Panc1 (cell line): ENCODE measurements at regions of chr1 and their contacts with region 1.

Region 1: DNA sequence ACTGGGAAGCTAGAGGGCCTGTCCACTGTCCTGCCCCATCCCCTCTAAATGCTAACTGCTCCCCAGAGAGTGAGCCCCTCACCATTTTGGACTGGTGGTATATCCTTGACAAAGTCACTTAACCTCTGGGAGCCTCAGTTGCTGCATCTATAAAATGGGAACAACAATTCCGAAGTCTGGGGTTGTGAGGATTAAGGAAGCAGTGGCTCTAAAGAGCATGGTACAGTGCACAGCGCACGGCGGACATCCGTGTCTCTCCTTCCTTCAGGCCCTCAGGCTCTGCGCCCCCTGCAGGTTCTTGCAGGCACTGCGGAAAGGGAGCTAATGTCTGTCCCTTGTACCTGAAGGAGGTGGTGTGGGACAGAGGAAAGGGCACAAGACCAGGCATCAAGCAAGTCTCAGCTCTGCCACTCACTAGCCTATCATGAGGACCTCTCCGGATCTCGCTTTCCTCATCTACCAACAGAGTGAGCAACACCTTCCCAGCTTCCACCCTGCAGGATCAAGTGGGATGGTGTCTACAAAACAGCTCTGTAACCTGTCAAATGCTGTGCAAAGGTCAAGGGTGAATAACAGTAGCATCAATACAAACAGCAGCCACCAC is 20.1 kb downstream of the ECE1 start:
- DNase-seq: peak; percentile 67
- ATAC-seq: peak; percentile 83
- H3K4me3 ChIP-seq: no peak overlapping the region
- H3K27ac ChIP-seq: no peak overlapping the region
- H3K4me1 ChIP-seq: no peaks in the 10 kb centered on the region
- H3K27me3 ChIP-seq: no peaks in the 10 kb centered on the region
- CTCF ChIP-seq: peak; percentile 96

Region 2: DNA sequence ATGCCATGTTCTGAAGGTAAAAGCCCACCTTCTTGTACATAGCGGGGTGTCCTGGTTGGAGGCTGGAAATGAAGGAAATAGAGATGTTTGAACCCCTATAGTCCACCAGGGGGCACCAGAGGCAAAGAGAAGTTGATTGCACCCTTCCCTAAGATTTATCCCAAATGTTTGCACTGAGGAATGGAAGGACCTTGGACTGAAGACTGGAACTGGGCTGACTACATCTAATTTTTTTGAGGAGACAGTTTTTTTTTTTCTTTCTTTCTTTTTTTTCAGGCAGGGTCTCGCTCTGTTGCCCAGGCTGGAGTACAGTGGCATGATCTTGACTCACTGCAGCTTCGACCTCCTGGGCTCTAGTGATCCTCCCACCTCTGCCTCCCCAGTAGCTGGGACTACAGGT is 38.1 kb before region 1 on chr1:
- CTCF ChIA-PET with region 1: interaction called, 15 read pairs
- POLR2A ChIA-PET with region 1: no interaction called
- in situ Hi-C with region 1: no loop called
- intact Hi-C with region 1: no loop called
- DNase-seq: no peak
- ATAC-seq: peak; percentile 83
- H3K4me3 ChIP-seq: no peak overlapping the region
- H3K27ac ChIP-seq: no peak overlapping the region
- H3K4me1 ChIP-seq: no peaks in the 10 kb centered on the region
- H3K27me3 ChIP-seq: no peaks in the 10 kb centered on the region
- CTCF ChIP-seq: peak; percentile 90

Region 3: DNA sequence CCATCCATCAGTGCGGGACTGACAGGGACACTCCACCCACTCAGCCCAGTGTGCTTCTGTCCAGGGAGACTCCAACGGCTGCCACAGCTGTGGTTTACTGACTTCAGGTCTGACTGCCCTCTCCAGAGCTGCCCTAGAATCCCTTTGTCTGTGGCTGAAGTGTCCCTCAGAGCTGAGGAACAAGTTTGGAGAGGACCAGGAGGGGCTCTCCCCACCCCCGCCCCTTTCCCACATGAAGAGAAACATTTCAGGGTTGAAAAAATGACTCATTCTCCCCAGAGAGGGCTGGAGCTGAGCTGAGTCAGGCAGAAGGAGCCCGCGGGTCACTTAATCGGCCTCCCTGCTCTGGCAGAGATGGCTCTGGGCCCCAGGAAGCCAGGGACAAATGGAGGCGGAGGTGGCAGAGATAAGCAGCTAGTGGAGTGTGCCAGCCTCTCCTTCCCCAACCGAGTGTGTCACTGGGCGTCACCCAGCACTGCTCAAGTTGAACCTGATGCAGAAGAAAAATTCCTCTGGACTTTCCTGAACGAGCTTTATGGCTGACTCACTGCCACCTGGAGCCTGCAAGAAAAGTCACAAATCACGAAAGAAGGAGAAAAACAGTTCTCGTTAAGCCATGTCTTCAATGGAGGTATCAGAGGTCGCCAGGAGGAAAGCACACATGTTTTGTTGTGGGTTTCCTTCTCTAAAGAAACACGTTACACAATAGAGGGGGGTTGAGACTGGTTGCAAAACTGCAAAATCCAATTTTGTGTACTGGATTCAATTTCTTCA is 54.4 kb after region 1 on chr1:
- CTCF ChIA-PET with region 1: interaction called, 10 read pairs
- POLR2A ChIA-PET with region 1: no interaction called
- in situ Hi-C with region 1: no loop called
- intact Hi-C with region 1: no loop called
- DNase-seq: no peak
- ATAC-seq: peak; percentile 79
- H3K4me3 ChIP-seq: peak overlapping the region in 1 of 2 experiments; percentile 38; a peak in 2 of 4 replicates
- H3K27ac ChIP-seq: peak overlapping the region; percentile 97
- H3K4me1 ChIP-seq: peaks cover 91% of the 10 kb centered on the region
- H3K27me3 ChIP-seq: no peaks in the 10 kb centered on the region
- CTCF ChIP-seq: no peak

Region 4: DNA sequence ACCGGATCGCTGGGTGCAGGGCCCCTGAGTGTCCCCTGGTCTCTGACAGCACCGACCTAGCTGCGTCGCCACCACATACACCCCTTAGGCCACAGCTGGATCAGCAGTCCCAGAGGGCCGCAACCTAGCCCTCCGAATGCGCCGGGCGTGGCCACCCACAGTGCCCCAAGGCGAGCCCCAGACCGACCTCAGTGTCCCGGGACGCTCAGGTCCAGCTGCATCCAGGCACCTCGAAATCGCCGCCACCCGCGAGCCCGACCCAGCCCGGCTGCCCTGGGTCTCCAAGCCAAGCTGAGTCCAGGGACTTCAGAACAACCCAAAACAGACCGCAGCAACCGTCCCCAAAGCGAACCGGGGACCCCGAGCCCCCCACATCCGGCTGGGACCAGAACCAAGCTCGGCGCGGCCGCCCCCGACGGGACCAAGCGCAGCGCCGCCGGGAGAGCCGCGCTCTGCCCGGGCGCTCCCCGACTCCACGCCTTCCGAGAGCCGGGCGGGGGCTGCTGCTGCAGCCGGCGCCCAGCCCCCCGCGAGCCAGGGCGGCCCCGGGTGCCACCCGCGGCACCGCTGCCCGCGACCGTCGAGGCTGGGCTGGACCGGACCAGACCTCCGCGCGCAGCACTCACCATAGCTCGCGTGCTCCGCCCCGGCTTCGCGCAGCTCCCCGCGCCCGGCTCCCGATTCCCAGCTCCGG is 74.7 kb after region 1 on chr1:
- CTCF ChIA-PET with region 1: interaction called, 12 read pairs
- POLR2A ChIA-PET with region 1: no interaction called
- in situ Hi-C with region 1: no loop called
- intact Hi-C with region 1: no loop called
- DNase-seq: no peak
- ATAC-seq: peak; percentile 50
- H3K4me3 ChIP-seq: peak overlapping the region; percentile 58 to 84
- H3K27ac ChIP-seq: peak overlapping the region; percentile 67
- H3K4me1 ChIP-seq: peaks cover 48% of the 10 kb centered on the region
- H3K27me3 ChIP-seq: no peaks in the 10 kb centered on the region
- CTCF ChIP-seq: no peak